ENCODE measurements at regions of chr2 and their contacts with region 1.

Region 1: GRCh38 chr2:168210895-168211570 is 36.4 kb downstream of the STK39 start:
- DNase-seq: no peak
- H3K4me3 Mint-ChIP-seq: peak overlapping the region; percentile 24
- H3K27ac Mint-ChIP-seq: peak overlapping the region; percentile 96
- H3K4me1 Mint-ChIP-seq: peaks cover 64% of the 10 kb centered on the region
- H3K27me3 Mint-ChIP-seq: no peaks in the 10 kb centered on the region

Region 2: GRCh38 chr2:168166902-168167510 is 44.0 kb before region 1 on chr2:
- intact Hi-C with region 1: loop called (anchors 1 kb)
- DNase-seq: no peak
- H3K4me3 Mint-ChIP-seq: peak overlapping the region; percentile 22
- H3K27ac Mint-ChIP-seq: peak overlapping the region; percentile 86
- H3K4me1 Mint-ChIP-seq: peaks cover 45% of the 10 kb centered on the region
- H3K27me3 Mint-ChIP-seq: no peaks in the 10 kb centered on the region

Region 3: DNA sequence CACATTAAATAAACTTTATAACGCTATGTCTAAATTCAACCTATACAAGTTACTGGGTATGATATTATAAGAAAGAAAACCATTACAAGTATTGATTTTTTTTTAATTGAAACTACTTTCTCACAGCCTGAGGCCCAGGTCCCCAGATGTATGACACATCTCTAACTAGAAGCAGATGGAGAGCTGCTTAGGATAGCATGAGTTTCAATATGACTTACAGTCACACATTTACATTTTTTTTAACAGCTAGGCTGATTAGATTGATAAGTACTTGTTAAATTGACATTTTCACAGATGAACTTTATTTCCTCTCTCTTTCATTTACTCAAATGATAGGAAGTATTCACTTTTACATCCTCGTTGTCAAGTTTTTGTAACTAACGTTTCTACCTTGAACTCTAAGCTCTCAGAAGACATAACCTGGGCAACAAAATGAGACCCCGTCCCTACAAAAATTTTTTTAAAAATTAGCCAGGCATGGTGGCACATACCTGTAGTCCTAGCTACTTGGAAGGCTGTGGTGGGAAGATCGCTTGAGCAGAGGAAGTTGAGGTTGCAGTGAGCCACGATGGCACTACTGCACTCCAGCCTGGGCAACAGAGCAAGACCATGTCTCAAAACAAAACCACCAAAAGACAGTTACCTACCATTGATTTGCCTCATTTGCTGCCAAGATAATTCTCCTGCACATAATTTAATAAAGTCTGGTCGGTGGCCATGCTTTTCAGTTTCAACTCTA is 16.1 kb before region 1 on chr2:
- intact Hi-C with region 1: loop called (anchors 1 kb)
- DNase-seq: peak; percentile 45
- H3K4me3 Mint-ChIP-seq: peak overlapping the region; percentile 69
- H3K27ac Mint-ChIP-seq: peak overlapping the region; percentile 91
- H3K4me1 Mint-ChIP-seq: peaks cover 74% of the 10 kb centered on the region
- H3K27me3 Mint-ChIP-seq: no peaks in the 10 kb centered on the region

Region 4: DNA sequence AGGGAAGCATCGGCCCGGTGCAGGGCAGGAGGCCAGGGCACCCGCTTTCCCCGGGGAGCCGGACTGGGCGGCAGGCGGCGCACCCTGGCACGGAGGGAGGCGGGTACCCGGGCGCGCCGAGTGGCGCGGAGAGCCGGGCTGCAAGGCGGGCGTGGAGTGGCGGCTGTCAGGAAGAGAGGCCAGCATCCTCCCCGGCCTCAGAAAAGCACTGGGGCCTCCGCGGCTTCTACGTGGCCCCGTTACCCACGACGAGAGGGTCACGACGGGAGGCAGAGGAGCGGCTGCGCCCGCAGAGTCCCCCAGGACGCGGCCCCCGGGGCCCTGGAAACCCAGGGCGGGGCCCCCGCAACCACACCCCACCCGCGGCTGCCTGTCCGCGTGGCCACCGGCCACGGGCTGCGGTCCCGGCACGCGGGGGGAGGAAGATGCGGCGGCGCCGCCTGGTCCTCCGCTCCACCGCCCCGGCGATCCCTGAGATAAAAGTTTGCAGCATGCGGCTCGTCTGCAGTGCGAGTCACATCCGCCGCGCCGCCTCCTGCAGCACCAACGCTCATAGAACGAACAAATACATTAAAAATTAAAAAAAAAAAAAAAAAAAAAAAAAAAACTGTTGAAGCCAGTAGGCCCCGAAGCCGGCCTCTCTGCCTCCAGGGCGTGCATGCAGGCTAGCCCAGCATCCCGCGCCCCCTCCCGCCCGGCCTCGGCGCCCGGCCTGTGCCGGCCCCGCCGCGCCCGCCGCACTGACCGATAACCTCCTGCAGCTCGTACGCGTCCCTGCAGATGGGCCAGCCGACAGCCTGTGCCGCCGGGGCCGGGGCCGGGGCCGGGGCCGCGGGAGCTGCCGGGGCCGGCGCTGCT is 35.7 kb after region 1 on chr2:
- intact Hi-C with region 1: loop called (anchors 1 kb)
- DNase-seq: peak; percentile 83
- H3K4me3 Mint-ChIP-seq: peak overlapping the region; percentile 93
- H3K27ac Mint-ChIP-seq: peak overlapping the region; percentile 94
- H3K4me1 Mint-ChIP-seq: peaks cover 42% of the 10 kb centered on the region
- H3K27me3 Mint-ChIP-seq: no peaks in the 10 kb centered on the region

Region 5: GRCh38 chr2:168699844-168700417 is 488.9 kb after region 1 on chr2:
- intact Hi-C with region 1: no loop called
- DNase-seq: no peak
- H3K4me3 Mint-ChIP-seq: no peak overlapping the region
- H3K27ac Mint-ChIP-seq: no peak overlapping the region
- H3K4me1 Mint-ChIP-seq: peaks cover 6% of the 10 kb centered on the region
- H3K27me3 Mint-ChIP-seq: no peaks in the 10 kb centered on the region

Region 6: GRCh38 chr2:168751104-168751740 is 540.2 kb after region 1 on chr2:
- intact Hi-C with region 1: no loop called
- DNase-seq: peak; percentile 9
- H3K4me3 Mint-ChIP-seq: no peak overlapping the region
- H3K27ac Mint-ChIP-seq: no peak overlapping the region
- H3K4me1 Mint-ChIP-seq: peaks cover 20% of the 10 kb centered on the region
- H3K27me3 Mint-ChIP-seq: no peaks in the 10 kb centered on the region

Measured in activated T-helper 2 cell treated with anti-CD3 and anti-CD28 coated beads, Interferon-gamma antibody, Interleukin-2, Interleukin-4, amounts not matched to agents 10 μg/mL and 5 μg/mL and 100 μg/mL, durations not matched to agents 14 hours and 24 hours and 36 hours (primary cell).